Left colon (tissue), 2 donors: ENCODE measurements at regions of chr9 and their contacts with region 1.

Region 1: GRCh38 chr9:36102742-36103495 is 33.6 kb upstream of the GLIPR2 start:
- DNase-seq: peak; percentile 86 to 93
- ATAC-seq: peak; percentile 99

Region 2: DNA sequence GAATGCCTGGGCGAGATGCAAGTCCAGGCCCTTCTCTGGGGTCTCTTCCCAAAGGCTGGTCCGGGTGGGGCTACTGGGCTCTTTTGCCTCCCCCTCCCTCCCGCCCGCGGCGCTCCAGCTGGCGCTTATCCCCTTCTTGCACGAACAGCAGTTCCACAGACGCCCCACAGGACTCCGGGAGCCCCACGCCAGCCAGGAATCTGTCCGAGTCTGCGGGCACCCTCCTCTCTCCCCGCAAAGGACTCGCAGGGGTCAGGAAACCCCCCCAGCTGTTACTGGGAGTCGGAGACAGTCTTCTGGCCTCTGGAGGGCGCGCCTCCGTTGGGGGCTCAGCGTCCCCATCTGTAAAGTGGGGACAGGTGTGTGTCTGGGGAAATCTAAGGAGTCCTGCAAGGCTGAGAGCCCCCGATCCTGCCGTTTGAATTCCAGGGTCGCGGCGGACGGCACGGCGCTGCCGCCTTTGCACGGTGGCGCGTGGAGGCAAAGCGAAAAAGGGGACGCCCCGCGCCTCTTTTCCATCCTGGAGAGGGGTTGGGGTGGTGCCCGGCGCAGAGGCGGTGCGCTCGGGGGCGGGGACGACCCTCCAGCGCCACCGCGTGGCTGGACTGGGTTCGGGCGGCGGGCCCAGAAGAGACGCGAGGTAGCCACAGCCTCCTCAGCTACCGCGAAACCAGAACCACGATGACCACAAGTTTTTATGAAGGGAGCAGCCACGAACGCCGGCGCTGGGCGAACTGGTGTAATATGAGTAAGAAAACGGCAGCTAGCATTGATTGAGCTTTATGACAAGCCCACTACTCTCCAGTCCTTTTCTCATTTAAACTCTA is 63.4 kb after region 1 on chr9:
- intact Hi-C with region 1: loop called in 1 of 2 experiments (anchors 1 kb)
- DNase-seq: peak; percentile 63 to 86
- ATAC-seq: peak; percentile 96